H1 (cell line): ENCODE measurements at regions of chr4 and their contacts with region 1.

Region 1: DNA sequence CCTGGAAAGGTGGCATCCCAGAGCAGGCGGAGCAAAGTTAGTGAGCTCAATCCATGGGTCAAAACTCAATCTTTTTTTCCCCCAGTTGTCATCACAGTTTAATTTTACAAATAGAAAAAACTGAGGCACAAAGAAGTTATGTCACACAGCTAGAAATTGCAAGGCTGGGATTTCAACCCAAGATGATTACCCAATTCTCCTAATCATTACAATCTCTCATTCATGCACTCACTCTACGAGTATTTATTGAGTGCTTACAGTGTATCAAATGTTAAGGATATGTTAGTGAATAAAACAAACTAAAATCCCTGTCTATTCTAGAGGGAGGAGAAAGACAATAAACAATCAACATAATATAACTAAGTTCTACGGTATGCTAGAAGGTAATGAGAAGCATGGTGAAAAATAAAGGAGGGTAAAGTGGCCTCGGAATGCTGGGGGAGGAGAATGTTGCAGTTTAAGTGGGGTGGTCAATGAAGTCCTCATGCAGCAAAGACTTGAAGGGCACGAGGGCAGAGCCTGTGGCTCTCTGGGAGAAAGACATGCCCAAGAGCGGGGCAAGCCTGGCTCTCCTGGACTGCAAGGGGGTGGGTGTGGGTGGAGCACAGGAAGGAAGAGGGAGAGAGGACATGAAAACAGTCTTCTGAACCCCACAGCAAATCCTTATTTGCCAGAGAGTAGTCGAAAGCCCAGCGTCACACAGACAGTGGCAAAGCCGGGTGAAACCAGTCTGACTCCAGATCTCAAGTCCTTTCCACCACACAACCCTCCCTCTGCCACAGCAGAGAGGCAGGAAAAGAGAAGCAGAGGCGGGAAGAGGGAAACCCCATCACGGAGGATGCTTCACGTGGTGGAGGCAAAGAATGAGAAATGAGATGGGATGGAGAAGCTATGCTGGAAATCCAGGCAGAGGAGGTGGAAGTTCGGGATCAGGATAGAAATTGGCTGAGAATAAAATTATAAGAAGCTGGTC is 48.3 kb downstream of the RAB33B start:
- DNase-seq: no peak
- H3K4me3 ChIP-seq: no peak overlapping the region
- H3K27ac ChIP-seq: no peak overlapping the region
- H3K4me1 ChIP-seq: no peaks in the 10 kb centered on the region; a peak in 1 of 7 replicates
- H3K27me3 ChIP-seq: no peaks in the 10 kb centered on the region
- CTCF ChIP-seq: no peak
- EP300 ChIP-seq: no peak
- POLR2A ChIP-seq: no peak
- RAD21 ChIP-seq: no peak

Region 2: GRCh38 chr4:139483000-139483399 is 19.2 kb before region 1 on chr4:
- CTCF ChIA-PET with region 1: interaction called, 22 read pairs
- POLR2A ChIA-PET with region 1: no interaction called
- DNase-seq: no peak
- H3K4me3 ChIP-seq: no peak overlapping the region
- H3K27ac ChIP-seq: no peak overlapping the region
- H3K4me1 ChIP-seq: no peaks in the 10 kb centered on the region
- H3K27me3 ChIP-seq: no peaks in the 10 kb centered on the region
- CTCF ChIP-seq: no peak
- EP300 ChIP-seq: no peak
- POLR2A ChIP-seq: no peak
- RAD21 ChIP-seq: no peak

Region 3: DNA sequence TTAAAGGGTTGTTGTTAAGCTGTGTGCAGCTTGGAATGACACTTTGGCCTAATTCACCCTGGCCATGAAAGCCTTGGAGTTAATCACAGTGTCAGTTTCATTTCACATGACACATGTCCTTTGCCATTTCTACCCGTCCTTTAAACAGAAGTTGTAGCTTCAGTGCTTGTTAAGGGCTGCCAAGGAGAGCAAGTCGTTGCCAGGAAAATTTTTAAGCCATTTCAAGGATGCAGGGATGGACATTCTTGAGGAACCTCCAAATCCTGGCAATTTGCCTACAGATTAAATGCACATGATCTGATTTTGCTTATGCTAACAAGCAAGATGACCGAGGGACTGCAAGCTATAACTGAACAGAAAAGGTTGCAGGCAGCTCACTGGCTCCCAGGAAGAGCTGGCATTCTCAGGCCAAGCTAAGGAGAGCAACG is 13.3 kb after region 1 on chr4:
- CTCF ChIA-PET with region 1: interaction called, 38 read pairs
- POLR2A ChIA-PET with region 1: no interaction called
- DNase-seq: no peak
- H3K4me3 ChIP-seq: no peak overlapping the region
- H3K27ac ChIP-seq: no peak overlapping the region
- H3K4me1 ChIP-seq: peaks cover 0 to 9% (median 2%) of the 10 kb centered on the region in 4 experiments; a peak in 1 of 7 replicates
- H3K27me3 ChIP-seq: no peaks in the 10 kb centered on the region
- CTCF ChIP-seq: no peak
- EP300 ChIP-seq: no peak
- POLR2A ChIP-seq: no peak
- RAD21 ChIP-seq: no peak

Region 4: DNA sequence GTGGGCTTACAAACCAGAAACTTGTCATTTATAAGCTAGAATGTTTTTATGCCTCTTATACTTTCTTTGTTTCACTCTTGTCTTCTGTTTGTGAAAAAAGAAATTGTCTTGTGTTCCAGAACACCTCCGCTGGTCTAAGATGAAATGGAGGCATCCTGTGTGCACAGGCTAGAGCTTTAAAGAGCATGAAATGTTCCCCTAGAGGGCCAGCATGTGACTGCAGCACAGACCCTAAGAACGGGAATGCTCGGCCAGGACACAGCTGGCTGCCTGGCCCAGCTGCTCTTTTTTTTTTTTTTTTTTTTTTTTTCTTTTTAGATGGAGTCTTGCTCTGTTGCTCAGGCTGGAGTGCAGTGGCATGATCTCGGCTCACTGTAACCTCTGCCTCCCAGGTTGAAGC is 20.2 kb after region 1 on chr4:
- CTCF ChIA-PET with region 1: interaction called, 20 read pairs
- POLR2A ChIA-PET with region 1: interaction called, 5 read pairs
- DNase-seq: no peak
- H3K4me3 ChIP-seq: no peak overlapping the region
- H3K27ac ChIP-seq: no peak overlapping the region
- H3K4me1 ChIP-seq: no peaks in the 10 kb centered on the region
- H3K27me3 ChIP-seq: no peaks in the 10 kb centered on the region
- CTCF ChIP-seq: peak; percentile 11 to 37 (median 28); a peak in 3 of 4 replicates
- EP300 ChIP-seq: no peak
- POLR2A ChIP-seq: no peak
- RAD21 ChIP-seq: peak in 1 of 2 experiments; percentile 20; a peak in 1 of 4 replicates

Region 5: DNA sequence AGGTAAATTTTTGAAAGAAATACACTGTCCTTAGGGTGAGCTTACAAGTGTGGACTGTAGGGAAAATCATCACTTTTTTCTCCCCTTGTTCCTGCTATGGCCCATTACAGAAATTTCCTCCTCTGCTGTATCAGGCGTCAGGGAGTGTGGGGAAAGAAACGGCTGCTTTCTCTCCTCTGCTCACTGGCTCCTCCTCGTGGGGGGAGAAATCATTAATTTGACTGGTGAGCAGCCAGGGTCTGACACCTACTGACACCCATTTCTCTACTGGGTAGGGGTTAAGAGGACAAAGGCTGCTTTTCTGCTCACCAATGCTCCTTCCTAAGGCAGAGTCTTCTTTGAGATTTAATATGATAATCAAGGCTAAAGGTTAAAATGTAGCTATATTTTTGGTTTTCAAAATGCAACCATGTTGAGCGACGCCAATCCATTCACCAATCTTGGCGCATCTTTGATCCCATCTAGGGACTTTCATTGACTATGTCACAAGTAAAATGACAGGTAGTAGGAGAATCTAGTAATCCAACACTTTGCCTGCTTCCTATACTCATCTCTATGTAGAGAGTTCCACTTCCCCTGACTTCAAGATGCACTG is 28.7 kb after region 1 on chr4:
- CTCF ChIA-PET with region 1: interaction called, 17 read pairs
- POLR2A ChIA-PET with region 1: no interaction called
- DNase-seq: peak in 1 of 2 experiments; percentile 91
- H3K4me3 ChIP-seq: no peak overlapping the region
- H3K27ac ChIP-seq: no peak overlapping the region
- H3K4me1 ChIP-seq: no peaks in the 10 kb centered on the region
- H3K27me3 ChIP-seq: no peaks in the 10 kb centered on the region
- CTCF ChIP-seq: peak; percentile 66 to 92 (median 85)
- EP300 ChIP-seq: no peak
- POLR2A ChIP-seq: no peak
- RAD21 ChIP-seq: peak; percentile 78 to 83